Spleen (tissue), 13 donors: ENCODE measurements at regions of chr21 and their contacts with region 1.

Region 1: DNA sequence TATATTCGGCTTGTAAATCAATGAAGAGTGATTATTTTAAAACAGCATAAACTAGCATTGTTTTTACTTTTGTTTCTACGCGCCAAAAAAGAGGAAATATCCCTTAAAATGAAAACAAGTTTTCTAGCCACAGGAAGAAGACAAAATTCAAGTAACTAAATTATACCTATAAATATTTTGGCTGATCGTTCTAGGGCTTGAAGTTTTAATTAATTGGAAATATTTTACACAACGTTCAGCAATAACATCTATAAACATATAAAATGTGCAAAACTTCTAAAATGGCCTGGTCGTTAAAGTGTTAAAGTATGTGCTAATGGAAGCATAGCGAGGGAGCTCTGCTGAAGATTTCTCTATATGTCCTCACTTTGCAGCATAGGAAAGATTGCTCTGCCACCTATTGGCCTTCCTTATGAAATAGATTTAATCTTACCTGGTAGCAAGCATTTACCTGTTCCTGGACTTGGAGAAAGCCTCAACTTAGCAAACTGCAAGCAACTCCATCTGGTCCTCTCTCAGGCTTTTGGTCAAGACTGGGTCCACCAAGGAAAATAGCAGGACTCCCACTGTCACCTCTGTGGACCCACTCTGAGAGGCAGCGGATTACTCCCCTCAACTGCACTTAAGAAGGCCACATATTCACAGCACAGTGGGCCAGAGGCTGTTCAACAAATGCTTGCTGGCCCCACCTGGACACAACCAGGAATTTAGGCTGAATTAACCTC is 351.3 kb upstream of the RUNX1 start:
- DNase-seq: no peak
- H3K4me3 ChIP-seq: no peak overlapping the region
- H3K27ac ChIP-seq: no peak overlapping the region
- H3K4me1 ChIP-seq: peaks cover 0 to 26% (median 4%) of the 10 kb centered on the region in 6 donors
- H3K27me3 ChIP-seq: peaks cover 0 to 4% (median 0%) of the 10 kb centered on the region in 7 donors
- CTCF ChIP-seq: peak in 10 of 11 experiments; percentile 19 to 52 (median 49)
- POLR2A ChIP-seq: no peak

Region 2: GRCh38 chr21:34888569-34889319 is 511.7 kb before region 1 on chr21:
- intact Hi-C with region 1: loop called (anchors 5 kb)
- DNase-seq: peak; percentile 96
- H3K4me3 ChIP-seq: peak overlapping the region; percentile 60 to 96 (median 88)
- H3K27ac ChIP-seq: peak overlapping the region; percentile 84 to 98 (median 95)
- H3K4me1 ChIP-seq: peaks cover 15 to 90% (median 58%) of the 10 kb centered on the region in 6 donors
- H3K27me3 ChIP-seq: peaks cover 0 to 60% (median 14%) of the 10 kb centered on the region in 7 donors
- CTCF ChIP-seq: peak in 2 of 11 experiments; percentile 16 to 37
- POLR2A ChIP-seq: peak; percentile 34 to 93 (median 69)

Region 3: DNA sequence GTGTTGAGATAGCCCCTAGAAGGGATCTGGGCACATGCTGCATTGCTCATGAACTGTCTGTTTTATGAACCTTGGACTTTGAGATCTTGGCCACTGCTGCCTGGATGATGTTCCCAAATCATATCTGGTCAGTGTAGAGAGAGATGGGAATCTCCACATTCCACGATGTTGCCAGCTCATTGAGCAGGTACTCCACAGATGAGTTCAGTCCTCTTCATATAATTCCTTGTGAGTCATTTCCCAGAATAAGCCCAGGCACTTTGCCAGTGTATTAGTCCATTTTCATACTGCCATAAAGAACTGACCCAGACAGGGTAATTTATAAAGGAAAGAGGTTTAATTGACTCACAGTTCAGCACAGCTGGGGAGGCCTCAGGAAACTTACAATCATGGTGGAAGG is 97.3 kb before region 1 on chr21:
- intact Hi-C with region 1: no loop called
- DNase-seq: no peak
- H3K4me3 ChIP-seq: no peak overlapping the region
- H3K27ac ChIP-seq: no peak overlapping the region
- H3K4me1 ChIP-seq: no peaks in the 10 kb centered on the region
- H3K27me3 ChIP-seq: no peaks in the 10 kb centered on the region
- CTCF ChIP-seq: no peak
- POLR2A ChIP-seq: no peak

Region 4: DNA sequence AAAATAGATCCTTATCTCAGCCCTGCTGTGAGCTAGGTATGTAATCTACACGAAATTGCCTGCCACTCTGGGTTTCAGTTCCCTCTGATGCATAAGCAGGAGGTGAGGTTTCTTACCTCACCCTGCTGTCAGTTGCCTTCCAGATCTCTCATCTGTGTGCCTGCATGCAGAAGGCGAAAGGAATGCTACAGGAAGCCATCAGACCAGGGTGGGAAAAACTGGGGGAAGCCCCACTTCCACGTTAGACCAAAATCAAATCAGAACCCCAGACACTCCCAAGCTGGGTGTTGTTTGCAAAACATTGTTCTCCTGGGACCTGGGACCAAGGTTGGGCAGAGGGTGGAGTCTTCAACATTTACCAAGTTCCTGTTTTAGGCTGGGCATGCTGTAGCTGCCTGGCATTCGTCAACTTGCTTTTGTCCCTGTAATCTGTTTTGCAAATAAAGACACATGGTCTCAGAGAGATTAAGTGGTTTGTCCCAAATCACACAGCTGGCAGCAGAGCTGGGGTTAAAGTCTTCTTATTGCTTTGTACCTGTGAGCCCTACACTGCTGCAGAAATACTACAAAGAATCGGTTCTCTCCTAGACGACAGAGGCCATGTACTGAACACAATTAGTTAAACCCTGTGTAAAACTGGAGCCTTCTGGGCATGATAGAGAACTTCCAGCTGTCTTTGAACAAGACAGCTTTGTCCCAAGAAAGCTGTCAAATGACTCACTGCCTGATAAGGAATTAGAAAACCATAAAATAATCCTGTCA is 38.4 kb after region 1 on chr21:
- intact Hi-C with region 1: no loop called
- DNase-seq: no peak
- H3K4me3 ChIP-seq: peak overlapping the region in 1 of 8 donors; percentile 19
- H3K27ac ChIP-seq: peak overlapping the region in 1 of 8 donors; percentile 36
- H3K4me1 ChIP-seq: peaks cover 0 to 17% (median 12%) of the 10 kb centered on the region in 6 donors
- H3K27me3 ChIP-seq: no peaks in the 10 kb centered on the region
- CTCF ChIP-seq: no peak
- POLR2A ChIP-seq: no peak